ENCODE measurements at regions of chr12 and their contacts with region 1.

Region 1: GRCh38 chr12:82685790-82686167 is 927 bp upstream of the TMTC2 start:
- DNase-seq: peak; percentile 70
- ATAC-seq: peak; percentile 56
- H3K4me3 Mint-ChIP-seq: peak overlapping the region; percentile 87
- H3K27ac Mint-ChIP-seq: peak overlapping the region; percentile 77
- H3K4me1 Mint-ChIP-seq: peaks cover 19% of the 10 kb centered on the region
- H3K27me3 Mint-ChIP-seq: peaks cover 10% of the 10 kb centered on the region
- CTCF ChIP-seq: no peak

Region 2: DNA sequence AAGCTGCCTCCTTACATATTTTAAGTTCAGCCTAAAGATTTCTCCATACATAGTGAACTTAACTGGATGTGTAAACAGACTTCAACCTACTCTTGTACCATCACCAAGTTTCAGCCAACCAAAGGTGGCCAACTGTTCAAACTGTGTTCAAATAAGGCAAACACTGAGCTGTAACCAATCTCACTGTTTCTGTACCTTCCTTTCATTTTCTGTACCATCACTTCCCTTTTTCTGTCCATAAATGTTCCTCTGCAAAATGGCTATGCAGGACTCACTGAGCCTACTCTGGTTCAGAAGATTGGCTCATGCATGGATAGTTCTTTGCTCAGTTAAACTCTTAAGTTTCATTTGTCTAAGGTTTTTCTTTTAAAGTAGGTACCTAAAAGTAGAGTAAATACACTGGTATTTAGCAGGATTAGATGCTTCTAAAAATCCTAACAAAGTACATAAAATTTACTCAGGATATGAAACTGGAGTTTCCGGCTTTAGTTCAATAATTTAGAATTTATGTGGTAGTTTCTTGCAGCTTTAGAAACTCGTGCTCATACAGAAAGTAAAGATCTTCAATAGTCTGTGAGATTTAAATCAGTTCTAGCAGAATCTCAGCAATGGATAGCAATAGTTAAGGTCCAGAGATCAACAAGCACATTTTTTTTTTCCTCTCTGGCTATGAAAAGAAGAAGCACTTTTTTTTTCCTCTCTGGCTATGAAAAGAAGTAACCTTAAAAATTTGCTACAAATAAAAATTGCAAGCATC is 644.6 kb before region 1 on chr12:
- CTCF ChIA-PET with region 1: no interaction called
- POLR2A ChIA-PET with region 1: no interaction called
- intact Hi-C with region 1: no loop called
- DNase-seq: no peak
- ATAC-seq: no peak
- H3K4me3 Mint-ChIP-seq: no peak overlapping the region
- H3K27ac Mint-ChIP-seq: no peak overlapping the region
- H3K4me1 Mint-ChIP-seq: no peaks in the 10 kb centered on the region
- H3K27me3 Mint-ChIP-seq: no peaks in the 10 kb centered on the region
- CTCF ChIP-seq: no peak

Region 3: GRCh38 chr12:82358200-82359114 is 327.3 kb before region 1 on chr12 and contains the starts of genes CCDC59 and METTL25:
- CTCF ChIA-PET with region 1: interaction called, 3 read pairs
- POLR2A ChIA-PET with region 1: interaction called, 24 read pairs
- intact Hi-C with region 1: loop called (anchors 1 kb)
- DNase-seq: peak; percentile 90
- ATAC-seq: peak; percentile 90
- H3K4me3 Mint-ChIP-seq: peak within 1 kb of the TSS; percentile 98
- H3K27ac Mint-ChIP-seq: peak within 1 kb of the TSS; percentile 97
- H3K4me1 Mint-ChIP-seq: peaks cover 63% of the 10 kb centered on the region
- H3K27me3 Mint-ChIP-seq: no peaks in the 10 kb centered on the region
- CTCF ChIP-seq: peak; percentile 55
- total RNA-seq, gene CCDC59: 48.9 and 50.3 TPM in 2 replicates
- total RNA-seq, gene METTL25: 14.0 and 17.1 TPM in 2 replicates

Region 4: DNA sequence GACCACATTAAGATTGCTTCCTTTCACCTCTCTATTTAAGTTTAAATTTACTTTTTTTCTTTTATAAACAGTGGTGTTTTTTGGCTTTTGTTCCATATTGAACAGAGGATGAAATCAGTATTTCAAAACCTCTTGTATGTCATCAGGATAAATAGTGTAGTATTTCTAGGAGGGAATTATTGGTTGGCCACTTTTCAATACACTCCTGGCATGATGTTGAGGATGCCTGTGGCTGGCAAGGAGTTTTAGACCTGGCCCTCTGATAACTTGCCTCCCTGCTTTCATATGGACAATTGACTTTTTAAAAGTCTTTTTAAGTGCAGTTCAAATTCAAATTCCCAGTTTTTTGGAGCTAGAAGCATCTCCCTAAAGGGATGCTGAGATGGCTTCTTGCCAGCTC is 10.8 kb after region 1 on chr12:
- CTCF ChIA-PET with region 1: interaction called, 15 read pairs
- POLR2A ChIA-PET with region 1: no interaction called
- intact Hi-C with region 1: no loop called
- DNase-seq: no peak
- ATAC-seq: no peak
- H3K4me3 Mint-ChIP-seq: no peak overlapping the region
- H3K27ac Mint-ChIP-seq: no peak overlapping the region
- H3K4me1 Mint-ChIP-seq: no peaks in the 10 kb centered on the region
- H3K27me3 Mint-ChIP-seq: no peaks in the 10 kb centered on the region
- CTCF ChIP-seq: no peak

Region 5: GRCh38 chr12:83005534-83006197 is 319.9 kb after region 1 on chr12:
- CTCF ChIA-PET with region 1: no interaction called
- POLR2A ChIA-PET with region 1: no interaction called
- intact Hi-C with region 1: loop called (anchors 10 kb)
- DNase-seq: no peak
- ATAC-seq: no peak
- H3K4me3 Mint-ChIP-seq: no peak overlapping the region
- H3K27ac Mint-ChIP-seq: no peak overlapping the region
- H3K4me1 Mint-ChIP-seq: no peaks in the 10 kb centered on the region
- H3K27me3 Mint-ChIP-seq: no peaks in the 10 kb centered on the region
- CTCF ChIP-seq: no peak

Region 6: GRCh38 chr12:84397263-84397662 is 1711.5 kb after region 1 on chr12:
- CTCF ChIA-PET with region 1: no interaction called
- POLR2A ChIA-PET with region 1: no interaction called
- intact Hi-C with region 1: loop called (anchors 5 kb)
- DNase-seq: no peak
- ATAC-seq: no peak
- H3K4me3 Mint-ChIP-seq: no peak overlapping the region
- H3K27ac Mint-ChIP-seq: no peak overlapping the region
- H3K4me1 Mint-ChIP-seq: no peaks in the 10 kb centered on the region
- H3K27me3 Mint-ChIP-seq: no peaks in the 10 kb centered on the region
- CTCF ChIP-seq: no peak